GM10248 (cell line): ENCODE measurements at regions of chr10 and their contacts with region 1.

Region 1: GRCh38 chr10:73126343-73126742 is 16.1 kb downstream of the NUDT13 start:
- DNase-seq: no peak
- CTCF ChIP-seq: no peak

Region 2: DNA sequence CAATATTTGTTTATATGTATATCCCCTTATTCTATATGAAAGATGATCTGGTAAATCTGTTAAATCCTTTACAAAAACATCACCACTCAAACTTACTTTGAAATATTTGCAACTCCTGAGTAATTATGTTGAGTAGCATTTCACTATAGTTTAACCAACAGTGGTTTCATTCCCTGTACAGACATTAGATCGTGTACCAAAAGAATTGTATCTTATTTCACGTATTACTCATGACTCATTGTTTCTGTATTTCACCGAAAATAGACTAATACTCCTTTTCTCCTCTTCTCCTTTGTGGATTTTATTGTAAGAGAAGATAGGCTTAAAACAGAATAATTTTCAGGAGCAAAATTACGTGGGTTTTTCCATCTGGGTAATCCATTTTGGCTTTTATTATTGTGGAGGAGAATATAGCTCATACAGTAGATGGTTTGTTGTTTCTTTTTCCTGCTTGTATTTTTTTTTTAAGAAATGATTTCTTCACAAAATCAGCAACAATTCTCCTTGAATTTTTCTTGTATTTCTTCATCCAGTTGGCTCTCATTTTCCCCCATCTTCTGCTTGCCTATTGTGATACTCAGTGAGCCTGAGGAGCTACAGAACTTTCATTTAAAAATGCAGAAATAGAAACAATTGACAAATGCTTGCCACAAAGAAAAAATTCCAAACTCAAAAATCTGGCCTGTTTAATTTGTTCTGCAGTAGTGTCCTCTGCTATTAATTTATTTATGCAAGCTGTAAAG is 323.4 kb before region 1 on chr10:
- CTCF ChIA-PET with region 1: no interaction called
- POLR2A ChIA-PET with region 1: no interaction called
- DNase-seq: peak; percentile 17
- CTCF ChIP-seq: no peak

Region 3: GRCh38 chr10:73110345-73110849 is 15.9 kb before region 1 on chr10 and contains the start of gene NUDT13:
- CTCF ChIA-PET with region 1: interaction called, 16 read pairs
- POLR2A ChIA-PET with region 1: no interaction called
- DNase-seq: peak; percentile 68
- CTCF ChIP-seq: no peak